ENCODE measurements at regions of chr19 and their contacts with region 1.

Region 1: GRCh38 chr19:12974301-12975220 is 5.2 kb downstream of the DAND5 start:
- DNase-seq: no peak
- ATAC-seq: no peak
- H3K4me3 ChIP-seq: no peak overlapping the region
- H3K27ac ChIP-seq: no peak overlapping the region
- H3K4me1 ChIP-seq: peaks cover 0 to 4% of the 10 kb centered on the region in 2 donors
- H3K27me3 ChIP-seq: no peaks in the 10 kb centered on the region
- CTCF ChIP-seq: no peak
- POLR2A ChIP-seq: no peak

Region 2: DNA sequence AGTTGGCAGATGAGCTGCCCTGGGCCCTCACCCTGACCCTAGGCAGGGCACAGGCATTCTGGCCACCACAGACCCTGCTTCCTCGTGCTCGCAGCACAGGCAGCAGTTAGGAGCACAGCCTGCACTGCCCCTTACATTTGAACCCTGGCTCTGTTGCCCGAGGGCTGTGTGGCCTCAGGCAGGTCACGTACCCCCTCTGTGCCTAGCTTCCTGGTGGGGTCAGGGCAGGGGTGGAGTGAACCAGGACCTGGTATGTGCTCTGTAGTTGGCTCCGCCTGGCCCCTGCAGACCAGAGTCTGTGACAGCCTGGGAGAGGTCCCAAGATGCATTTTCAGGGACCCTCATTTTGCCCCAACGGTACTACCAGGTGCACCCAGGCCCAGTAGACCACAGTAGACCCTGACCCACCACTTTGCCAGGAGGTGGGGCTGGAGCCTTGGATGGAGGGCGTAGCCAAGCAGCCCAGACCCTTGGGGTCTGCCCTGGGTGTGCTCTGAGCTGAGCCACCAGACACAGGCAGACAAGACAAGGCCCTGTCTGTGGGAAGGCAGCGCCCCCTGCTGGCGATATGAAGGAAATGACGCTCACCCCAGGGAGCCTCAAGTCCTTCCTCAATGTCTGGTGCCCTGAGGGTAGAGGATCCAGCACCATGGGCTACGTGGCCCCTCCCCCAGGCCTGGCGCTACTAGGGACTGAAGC is 119.0 kb after region 1 on chr19:
- in situ Hi-C with region 1: loop called in 3 of 4 experiments (anchors 5 kb)
- intact Hi-C with region 1: loop called (anchors 1 kb)
- DNase-seq: peak; percentile 60 to 83
- ATAC-seq: peak; percentile 73 to 82
- H3K4me3 ChIP-seq: no peak overlapping the region
- H3K27ac ChIP-seq: peak overlapping the region; percentile 66 to 78 (median 74)
- H3K4me1 ChIP-seq: peaks cover 15 to 26% of the 10 kb centered on the region in 2 donors
- H3K27me3 ChIP-seq: no peaks in the 10 kb centered on the region
- CTCF ChIP-seq: peak; percentile 94 to 99 (median 97)
- POLR2A ChIP-seq: no peak

Measured in gastrocnemius medialis (tissue), 4 donors.